ENCODE measurements at regions of chr5 and their contacts with region 1.

Region 1: DNA sequence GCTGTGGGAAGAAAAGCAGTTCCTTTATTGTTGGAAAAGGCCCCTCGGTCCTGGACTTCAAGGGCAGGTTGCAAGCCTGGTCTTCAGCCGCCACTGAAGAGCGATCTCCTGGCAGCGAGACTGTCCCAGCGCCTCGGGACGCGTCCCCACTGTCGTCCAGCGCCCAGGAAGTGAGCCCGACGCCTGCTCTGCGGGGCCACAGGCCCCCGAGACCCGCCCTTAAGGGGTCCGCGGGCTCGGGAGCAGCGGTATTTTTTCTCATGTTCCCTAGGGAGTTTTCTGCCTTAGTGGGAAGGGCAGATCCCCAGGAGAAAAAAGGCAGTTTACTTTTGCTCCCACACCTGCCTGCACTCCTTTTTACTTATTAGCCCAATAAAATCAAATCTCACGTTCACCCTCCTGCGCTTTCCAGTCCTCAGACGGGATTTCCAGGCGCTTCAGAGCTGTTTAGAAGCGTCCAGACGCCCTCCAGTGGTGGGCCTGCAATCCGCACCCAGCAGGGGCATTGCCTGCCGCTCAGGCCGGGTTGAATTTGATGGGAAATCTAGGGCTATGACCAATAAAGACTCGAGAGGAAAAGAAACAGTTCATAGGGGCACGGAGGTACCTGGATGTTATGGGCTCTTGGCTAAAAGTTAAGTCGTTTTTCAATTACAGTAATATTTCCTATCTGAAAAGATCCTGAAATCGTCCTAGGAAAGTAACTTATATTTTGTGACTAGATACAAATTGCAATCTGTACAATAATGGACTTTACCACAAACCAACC is 2.8 kb upstream of the EFNA5 start:
- DNase-seq: peak in 1 of 2 donors; percentile 92
- H3K4me3 ChIP-seq: peak overlapping the region; percentile 56 to 78
- H3K27ac ChIP-seq: peak overlapping the region; percentile 82 to 89
- H3K4me1 ChIP-seq: no peaks in the 10 kb centered on the region
- H3K27me3 ChIP-seq: no peaks in the 10 kb centered on the region
- CTCF ChIP-seq: peak; percentile 88 to 96 (median 94)

Region 2: GRCh38 chr5:107104040-107104995 is 569.2 kb before region 1 on chr5:
- intact Hi-C with region 1: loop called (anchors 5 kb)
- DNase-seq: no peak
- H3K4me3 ChIP-seq: no peak overlapping the region
- H3K27ac ChIP-seq: no peak overlapping the region
- H3K4me1 ChIP-seq: peaks cover 0 to 15% of the 10 kb centered on the region in 2 donors
- H3K27me3 ChIP-seq: no peaks in the 10 kb centered on the region
- CTCF ChIP-seq: peak in 1 of 3 experiments; percentile 11

Region 3: DNA sequence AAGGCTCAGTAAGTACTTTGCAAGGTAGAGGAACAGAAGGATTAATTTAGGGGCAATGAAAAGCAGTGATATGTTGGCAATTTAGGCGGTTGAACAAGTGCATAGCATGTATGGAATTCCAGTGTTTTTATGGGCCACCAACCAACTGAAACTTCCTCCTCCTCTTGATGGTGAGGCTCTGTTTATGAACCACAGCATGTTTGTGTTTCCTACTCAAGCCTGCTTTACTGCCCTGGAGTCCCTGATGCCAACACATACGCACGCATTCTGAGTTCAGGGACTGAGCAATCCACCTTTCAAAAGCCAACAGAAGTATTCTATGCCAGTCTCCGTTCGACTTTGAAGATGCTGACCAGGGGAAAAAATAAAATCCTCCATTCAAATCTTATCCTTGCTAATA is 420.3 kb before region 1 on chr5:
- intact Hi-C with region 1: loop called (anchors 5 kb)
- DNase-seq: peak in 1 of 2 donors; percentile 66
- H3K4me3 ChIP-seq: peak overlapping the region in 1 of 2 donors; percentile 35
- H3K27ac ChIP-seq: peak overlapping the region; percentile 63 to 67
- H3K4me1 ChIP-seq: peaks cover 3 to 13% of the 10 kb centered on the region in 2 donors
- H3K27me3 ChIP-seq: no peaks in the 10 kb centered on the region
- CTCF ChIP-seq: no peak

Region 4: GRCh38 chr5:107469485-107470294 is 203.9 kb before region 1 on chr5:
- intact Hi-C with region 1: loop called (anchors 2 kb)
- DNase-seq: no peak
- H3K4me3 ChIP-seq: no peak overlapping the region
- H3K27ac ChIP-seq: peak overlapping the region; percentile 63 to 76
- H3K4me1 ChIP-seq: peaks cover 4 to 20% of the 10 kb centered on the region in 2 donors
- H3K27me3 ChIP-seq: no peaks in the 10 kb centered on the region
- CTCF ChIP-seq: no peak

Region 5: GRCh38 chr5:107571621-107572536 is 101.7 kb before region 1 on chr5:
- intact Hi-C with region 1: loop called (anchors 2 kb)
- DNase-seq: peak; percentile 74 to 97
- H3K4me3 ChIP-seq: peak overlapping the region; percentile 61 to 67
- H3K27ac ChIP-seq: peak overlapping the region; percentile 63 to 66
- H3K4me1 ChIP-seq: peaks cover 0 to 10% of the 10 kb centered on the region in 2 donors
- H3K27me3 ChIP-seq: no peaks in the 10 kb centered on the region
- CTCF ChIP-seq: peak; percentile 81 to 95 (median 91)

Region 6: DNA sequence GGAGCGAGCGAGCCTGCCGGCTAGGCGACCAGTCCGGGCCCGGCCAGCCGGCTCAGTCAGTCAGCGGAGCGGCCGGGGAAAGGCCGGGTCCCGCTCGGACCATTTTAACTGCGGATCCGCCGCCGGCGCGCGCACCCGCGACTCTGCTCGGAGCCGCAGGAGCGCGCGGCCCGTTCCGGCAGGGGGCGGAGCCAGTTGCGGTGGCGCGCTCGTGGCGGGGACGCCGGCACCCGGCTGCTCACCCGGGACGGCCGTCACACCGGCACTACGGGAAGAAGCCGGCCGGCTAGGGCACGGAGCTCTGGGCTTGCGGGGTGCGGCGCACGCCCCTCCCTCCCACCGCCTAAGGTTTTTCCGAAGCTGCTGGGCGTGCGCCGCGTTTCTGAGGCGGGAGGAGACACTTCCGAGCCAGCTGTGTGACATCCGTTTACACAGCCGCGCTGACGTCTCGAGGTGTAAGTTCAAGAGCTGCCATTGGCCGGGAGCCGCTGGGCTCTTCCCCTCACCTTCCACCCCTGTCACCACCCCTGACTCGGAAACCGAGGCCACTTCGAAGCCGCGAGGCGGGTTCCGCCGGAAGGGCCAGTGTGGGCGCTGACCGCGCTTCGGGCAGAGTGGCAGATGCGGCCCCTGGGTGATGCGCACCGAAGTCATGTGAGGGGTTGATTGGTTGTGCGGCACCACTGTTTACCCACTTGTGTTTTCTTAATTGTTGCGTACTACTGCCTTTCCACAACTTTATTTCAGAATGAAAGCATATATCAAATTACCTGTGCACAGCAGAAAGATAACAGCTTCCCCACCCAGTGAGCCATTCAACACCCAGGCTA is 708.6 kb after region 1 on chr5 and contains the start of gene FBXL17:
- intact Hi-C with region 1: loop called (anchors 5 kb)
- DNase-seq: peak; percentile 74 to 97
- H3K4me3 ChIP-seq: peak within 1 kb of the TSS; percentile 98 to 99
- H3K27ac ChIP-seq: peak within 1 kb of the TSS; percentile 100
- H3K4me1 ChIP-seq: peaks cover 4 to 14% of the 10 kb centered on the region in 2 donors
- H3K27me3 ChIP-seq: no peaks in the 10 kb centered on the region
- CTCF ChIP-seq: no peak
- total RNA-seq, gene FBXL17: 13.6 TPM

Measured in ascending aorta (tissue), 2 donors.